Mammary epithelial cell (primary cell): ENCODE measurements at regions of chr20 and their contacts with region 1.

Region 1: DNA sequence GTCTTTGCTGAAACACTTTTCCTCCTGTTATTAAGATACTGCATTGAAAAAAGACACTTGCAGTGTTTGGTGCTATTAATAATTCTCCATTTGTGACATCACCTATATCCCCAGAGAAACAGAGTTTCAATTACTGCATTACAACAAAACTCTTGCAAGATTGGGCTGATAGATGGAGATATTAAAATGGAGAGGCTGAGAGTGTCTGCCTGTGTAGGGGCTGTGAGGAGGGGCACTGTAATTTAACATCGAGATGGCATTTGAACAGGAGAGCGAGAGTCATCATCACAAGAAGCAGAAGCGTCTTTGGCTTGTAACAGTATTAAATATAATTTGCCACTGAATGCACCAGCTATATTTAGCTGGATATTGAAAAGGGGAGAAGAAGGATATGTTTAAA is 316.5 kb downstream of the CDH26 start:
- DNase-seq: no peak
- H3K4me3 ChIP-seq: no peak overlapping the region
- H3K27ac ChIP-seq: no peak overlapping the region
- H3K4me1 ChIP-seq: no peaks in the 10 kb centered on the region
- H3K27me3 ChIP-seq: no peaks in the 10 kb centered on the region
- CTCF ChIP-seq: no peak

Region 2: DNA sequence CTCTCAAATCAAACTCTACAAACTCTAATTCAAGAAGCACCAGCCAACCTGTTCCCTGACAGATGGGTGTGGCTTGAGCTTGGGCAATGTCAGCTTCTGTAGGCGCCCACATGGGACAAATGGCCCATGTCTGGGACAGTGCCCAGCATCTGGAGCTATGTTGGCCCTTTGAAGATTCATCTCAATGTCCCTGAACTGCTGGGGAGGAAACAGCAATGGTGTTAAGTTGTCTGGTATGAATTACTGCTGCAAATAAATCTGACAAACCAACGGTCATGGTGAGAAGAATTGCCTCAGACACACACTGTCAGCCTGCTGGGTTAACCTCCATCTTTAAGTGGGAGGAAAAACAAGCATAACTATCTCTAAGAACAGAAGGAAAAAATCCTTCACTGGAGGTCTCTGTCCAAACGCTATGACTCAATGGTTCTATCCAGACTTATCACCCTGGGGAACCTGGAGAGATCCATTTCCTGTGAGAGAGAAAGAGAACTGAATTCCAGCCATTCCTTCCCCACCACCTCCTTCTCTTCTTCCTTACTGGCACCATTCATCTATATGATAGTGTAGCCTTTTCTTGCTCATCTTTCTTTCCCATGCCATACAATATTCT is 41.6 kb before region 1 on chr20:
- CTCF ChIA-PET with region 1: no interaction called
- dilution Hi-C with region 1: loop called (anchors 5 kb)
- in situ Hi-C with region 1: no loop called
- intact Hi-C with region 1: no loop called
- DNase-seq: no peak
- H3K4me3 ChIP-seq: no peak overlapping the region
- H3K27ac ChIP-seq: no peak overlapping the region
- H3K4me1 ChIP-seq: peaks cover 4% of the 10 kb centered on the region
- H3K27me3 ChIP-seq: no peaks in the 10 kb centered on the region
- CTCF ChIP-seq: no peak

Region 3: DNA sequence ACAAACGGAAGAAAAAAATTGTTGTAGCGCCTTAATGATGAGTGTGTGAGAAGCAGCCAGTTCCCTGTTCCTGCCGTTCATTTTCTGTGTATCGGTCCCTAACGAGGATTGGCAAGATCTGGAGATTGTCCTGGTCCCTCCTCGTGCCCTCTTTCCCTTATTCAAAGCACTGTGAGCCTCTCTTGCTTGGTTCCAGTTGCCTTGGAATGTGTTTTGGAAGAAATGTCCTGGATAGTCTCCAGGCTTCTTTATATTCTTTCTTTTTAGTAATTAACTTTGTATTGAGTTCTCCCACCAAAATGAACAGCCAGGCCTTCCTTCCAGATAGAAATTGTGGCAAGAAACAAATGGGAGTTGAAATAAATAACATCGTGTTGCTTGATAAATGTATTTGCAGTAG is 31.8 kb after region 1 on chr20:
- CTCF ChIA-PET with region 1: no interaction called
- dilution Hi-C with region 1: no loop called
- in situ Hi-C with region 1: no loop called
- intact Hi-C with region 1: no loop called
- DNase-seq: no peak
- H3K4me3 ChIP-seq: no peak overlapping the region
- H3K27ac ChIP-seq: no peak overlapping the region
- H3K4me1 ChIP-seq: no peaks in the 10 kb centered on the region
- H3K27me3 ChIP-seq: no peaks in the 10 kb centered on the region
- CTCF ChIP-seq: no peak